Activated T-helper 2 cell treated with anti-CD3 and anti-CD28 coated beads, Interferon-gamma antibody, Interleukin-2, Interleukin-4, amounts not matched to agents 10 μg/mL and 5 μg/mL and 100 μg/mL, durations not matched to agents 14 hours and 24 hours and 36 hours (primary cell): ENCODE measurements at regions of chr2 and their contacts with region 1.

Region 1: DNA sequence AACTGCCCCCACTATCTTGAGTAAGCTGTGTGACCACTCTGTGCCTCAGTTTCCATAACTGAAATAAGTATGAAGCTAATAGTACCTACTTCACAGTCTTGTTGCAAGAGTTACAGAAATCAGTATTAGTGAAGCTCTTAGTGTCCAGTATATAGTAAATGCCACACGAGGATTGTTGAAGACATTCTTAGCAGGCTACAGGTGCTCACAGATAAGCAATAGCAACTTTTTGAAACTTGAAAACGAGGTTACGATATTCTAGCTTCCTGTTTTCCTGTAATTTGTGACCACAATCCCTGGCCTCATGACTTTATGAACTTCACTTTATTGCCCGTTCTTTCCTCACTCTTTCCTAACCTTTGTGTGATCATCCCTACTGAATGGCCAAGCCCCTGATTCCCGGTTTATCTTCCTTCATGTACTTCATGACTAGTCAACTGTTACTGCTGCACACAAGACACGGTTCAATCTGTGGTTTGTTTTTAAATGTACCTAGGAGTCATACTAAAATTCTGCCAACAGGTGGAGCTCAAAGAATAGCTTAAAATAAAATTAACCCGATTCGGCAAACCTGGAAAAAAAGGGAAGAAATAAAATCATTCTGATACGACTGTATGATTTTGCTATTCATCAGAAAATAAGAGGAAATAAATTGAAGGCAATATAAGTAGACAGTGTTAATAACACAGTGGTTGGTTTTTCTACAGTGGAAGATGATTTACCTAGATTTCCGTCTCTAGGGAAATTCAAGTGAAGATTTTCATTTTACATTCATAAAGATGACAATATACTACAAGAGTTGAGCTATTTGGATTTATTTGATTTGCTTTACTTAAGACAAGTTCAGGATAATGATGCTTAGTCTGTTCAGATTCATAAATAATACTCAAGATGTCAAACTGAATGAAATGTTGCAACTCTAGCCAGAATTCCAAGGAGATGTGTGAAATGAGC is 38.1 kb upstream of the STAT1 start:
- DNase-seq: no peak
- H3K4me3 Mint-ChIP-seq: no peak overlapping the region
- H3K27ac Mint-ChIP-seq: no peak overlapping the region
- H3K4me1 Mint-ChIP-seq: peaks cover 21% of the 10 kb centered on the region
- H3K27me3 Mint-ChIP-seq: no peaks in the 10 kb centered on the region

Region 2: GRCh38 chr2:191521608-191522208 is 469.6 kb after region 1 on chr2:
- intact Hi-C with region 1: loop called (anchors 5 kb)
- DNase-seq: no peak
- H3K4me3 Mint-ChIP-seq: no peak overlapping the region
- H3K27ac Mint-ChIP-seq: no peak overlapping the region
- H3K4me1 Mint-ChIP-seq: no peaks in the 10 kb centered on the region
- H3K27me3 Mint-ChIP-seq: peaks cover 17% of the 10 kb centered on the region